Activated B cell treated with CpG ODN at 0.5 μM for 24 hours (primary cell): ENCODE measurements at regions of chr11 and their contacts with region 1.

Region 1: DNA sequence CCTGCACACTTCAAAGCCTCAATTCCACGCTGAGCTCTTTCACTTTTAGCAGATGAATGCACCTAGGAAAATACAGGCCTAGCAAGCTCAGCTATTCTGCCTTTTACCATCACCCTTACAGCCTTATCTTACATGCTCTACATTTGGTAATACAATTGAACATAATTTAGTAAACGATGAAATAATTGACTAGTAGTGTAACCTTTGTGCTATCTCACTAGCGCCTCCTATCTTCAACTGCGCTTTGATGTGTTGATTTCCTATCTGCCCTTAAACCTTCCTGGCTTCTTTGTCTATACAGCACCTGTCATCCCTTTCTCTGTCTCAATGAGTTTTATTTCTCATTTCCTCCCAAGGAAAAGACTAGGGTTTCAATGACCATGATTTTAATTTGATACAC is 149.7 kb downstream of the LRRC4C start:
- DNase-seq: no peak
- ATAC-seq: peak; percentile 17
- H3K4me3 Mint-ChIP-seq: no peak overlapping the region
- H3K27ac Mint-ChIP-seq: peak overlapping the region; percentile 65
- H3K4me1 Mint-ChIP-seq: peaks cover 37% of the 10 kb centered on the region
- H3K27me3 Mint-ChIP-seq: no peaks in the 10 kb centered on the region
- CTCF ChIP-seq: no peak

Region 2: DNA sequence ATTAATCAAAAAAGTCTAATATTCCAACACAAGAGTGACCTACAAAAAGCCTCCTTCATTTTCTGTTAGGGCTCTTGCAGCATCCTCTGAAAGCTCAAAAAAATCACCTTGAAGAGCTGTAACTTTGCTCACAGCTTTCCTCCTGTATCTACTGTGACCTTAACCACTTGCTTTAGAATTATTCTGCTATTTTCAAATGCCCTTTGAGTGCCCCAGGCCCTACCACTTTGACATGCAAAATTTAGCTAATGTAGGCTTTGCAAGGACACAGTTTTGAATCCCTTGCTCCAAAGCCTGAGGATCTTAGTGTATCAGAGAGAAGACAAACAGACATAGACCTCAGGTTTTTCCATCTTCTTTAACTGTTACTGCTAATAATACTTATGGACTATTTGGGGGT is 103.3 kb before region 1 on chr11:
- CTCF ChIA-PET with region 1: no interaction called
- POLR2A ChIA-PET with region 1: no interaction called
- intact Hi-C with region 1: no loop called
- DNase-seq: no peak
- ATAC-seq: no peak
- H3K4me3 Mint-ChIP-seq: no peak overlapping the region
- H3K27ac Mint-ChIP-seq: no peak overlapping the region
- H3K4me1 Mint-ChIP-seq: no peaks in the 10 kb centered on the region
- H3K27me3 Mint-ChIP-seq: no peaks in the 10 kb centered on the region
- CTCF ChIP-seq: no peak

Region 3: GRCh38 chr11:41281131-41281742 is 28.5 kb before region 1 on chr11:
- CTCF ChIA-PET with region 1: no interaction called
- POLR2A ChIA-PET with region 1: no interaction called
- intact Hi-C with region 1: no loop called
- DNase-seq: no peak
- ATAC-seq: no peak
- H3K4me3 Mint-ChIP-seq: no peak overlapping the region
- H3K27ac Mint-ChIP-seq: no peak overlapping the region
- H3K4me1 Mint-ChIP-seq: no peaks in the 10 kb centered on the region
- H3K27me3 Mint-ChIP-seq: no peaks in the 10 kb centered on the region
- CTCF ChIP-seq: no peak

Region 4: DNA sequence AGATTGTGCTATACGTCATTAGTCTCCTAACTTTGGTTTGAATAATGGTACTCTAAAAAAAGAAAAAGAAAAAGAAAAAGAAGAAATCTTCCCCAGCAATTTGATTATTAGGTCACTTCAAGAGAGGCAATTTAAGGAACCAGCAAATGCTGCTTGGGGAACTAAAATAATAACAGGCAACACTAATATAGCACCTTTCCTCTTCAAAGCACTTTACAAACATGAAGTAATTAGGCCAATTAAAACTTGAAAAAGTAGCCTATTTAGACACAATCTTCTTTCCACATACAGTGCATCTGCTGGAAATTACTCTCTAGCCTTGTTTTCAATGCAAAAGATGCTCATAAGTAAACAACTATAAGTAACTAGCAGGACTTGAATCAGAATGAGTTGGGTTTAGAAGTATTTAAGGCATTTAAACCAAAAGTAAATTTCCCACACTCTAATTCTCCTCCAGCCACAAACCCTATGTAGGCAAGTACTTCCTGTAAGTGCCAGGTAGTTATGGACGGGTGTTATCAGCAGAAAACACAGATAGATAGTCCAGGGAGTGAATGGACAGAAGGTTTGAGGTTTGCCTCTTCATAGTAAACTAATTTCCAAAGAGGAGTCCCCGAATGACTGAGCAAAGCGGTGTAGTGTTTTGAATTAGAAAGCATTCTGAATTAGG is 105.2 kb after region 1 on chr11:
- CTCF ChIA-PET with region 1: no interaction called
- POLR2A ChIA-PET with region 1: no interaction called
- intact Hi-C with region 1: loop called (anchors 5 kb)
- DNase-seq: no peak
- ATAC-seq: no peak
- H3K4me3 Mint-ChIP-seq: no peak overlapping the region
- H3K27ac Mint-ChIP-seq: peak overlapping the region; percentile 35
- H3K4me1 Mint-ChIP-seq: peaks cover 19% of the 10 kb centered on the region
- H3K27me3 Mint-ChIP-seq: no peaks in the 10 kb centered on the region
- CTCF ChIP-seq: no peak